OCI-LY7 (cell line): ENCODE measurements at regions of chr18 and their contacts with region 1.

Region 1: DNA sequence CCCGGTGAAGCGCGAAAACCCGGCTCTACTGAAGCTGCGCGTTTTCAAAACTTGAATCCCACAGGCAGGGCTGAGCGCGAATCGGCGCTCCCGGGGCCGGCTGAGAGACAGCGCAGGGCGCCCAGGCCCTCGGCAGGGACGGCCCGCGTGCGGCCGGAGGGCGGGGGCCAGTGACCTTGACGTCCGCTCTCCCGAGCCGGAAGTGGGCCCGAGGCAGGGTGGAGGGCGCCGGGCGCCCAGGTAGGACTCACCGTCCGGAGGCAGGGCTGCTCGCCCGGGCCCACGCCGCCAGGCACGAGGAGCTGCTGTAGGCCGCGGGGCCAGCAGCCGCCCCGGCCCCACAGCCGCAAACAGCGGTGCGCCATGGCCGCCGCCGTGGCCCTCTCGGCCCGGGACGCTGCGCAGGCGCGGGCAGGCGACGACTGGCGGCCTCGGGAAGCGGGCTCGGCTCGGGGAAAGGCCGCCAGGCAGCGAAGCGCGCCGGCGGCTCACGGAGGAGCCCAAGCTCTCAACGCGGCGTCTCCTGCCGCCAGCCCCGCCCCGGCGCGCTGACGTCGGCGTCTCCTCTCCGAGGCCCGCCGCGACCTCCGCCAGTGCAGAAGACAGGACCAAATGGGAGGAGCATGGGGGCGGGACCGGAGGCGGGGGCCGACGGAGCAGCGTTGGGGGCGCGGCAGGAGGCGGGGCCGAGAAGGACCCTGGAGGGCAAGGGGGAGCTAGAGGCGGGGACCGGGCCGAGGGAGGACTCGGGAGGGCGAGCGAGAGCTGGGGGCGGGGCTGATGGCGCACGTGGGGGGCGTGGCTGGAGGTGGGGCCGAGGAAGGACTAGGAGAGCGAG is at the start of gene AFG3L2:
- DNase-seq: peak; percentile 98
- H3K4me3 ChIP-seq: peak within 1 kb of the TSS; percentile 85
- H3K27ac ChIP-seq: peak within 1 kb of the TSS; percentile 65
- H3K4me1 ChIP-seq: peaks cover 16% of the 10 kb centered on the region
- CTCF ChIP-seq: 0 out of 2 replicates have a peak, but pooled peaks have one; percentile 6
- total RNA-seq, gene AFG3L2: 44.8 and 49.2 TPM in 2 replicates

Region 2: DNA sequence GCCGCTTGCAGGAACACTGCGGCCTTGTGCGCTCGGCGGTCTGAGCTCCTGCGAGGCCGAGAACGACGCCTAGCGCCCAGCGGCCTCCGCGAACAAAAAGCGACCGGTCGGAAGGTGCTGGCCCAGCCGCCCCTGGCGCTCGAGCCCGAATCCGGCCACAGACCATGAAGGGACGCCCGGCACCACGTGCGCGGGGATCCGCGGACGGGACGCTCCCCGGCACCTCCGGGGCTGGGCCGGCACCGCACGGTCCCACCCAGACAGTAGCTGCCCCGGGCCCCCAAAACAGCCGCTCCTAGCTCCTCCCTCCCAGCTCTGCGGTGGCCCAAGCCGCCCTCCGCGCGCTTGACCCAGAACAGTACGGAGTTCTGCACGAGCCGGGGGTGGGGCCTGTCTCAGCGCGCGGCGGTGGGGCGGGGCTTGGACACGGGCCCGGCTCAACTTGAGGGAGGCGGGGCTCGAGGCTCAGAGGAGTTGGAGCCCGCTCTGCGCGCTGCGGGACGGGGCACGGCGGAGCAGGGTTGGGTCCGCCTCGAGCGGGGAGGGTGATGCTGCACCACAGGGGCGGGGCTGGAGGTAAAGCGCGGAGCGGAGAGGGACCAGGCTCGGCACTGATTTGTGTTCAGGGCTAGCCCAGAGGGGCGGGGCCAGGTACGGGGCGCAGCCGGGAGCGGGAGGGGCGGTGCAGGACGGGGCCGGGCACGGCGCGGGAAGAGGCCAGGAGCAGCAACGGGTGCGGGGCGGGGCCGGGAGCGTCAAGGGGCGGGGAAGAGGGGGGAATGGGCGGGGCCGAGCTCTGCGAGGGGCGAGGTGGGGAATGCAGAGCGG is 396.2 kb before region 1 on chr18:
- CTCF ChIA-PET with region 1: no interaction called
- POLR2A ChIA-PET with region 1: interaction called, 3 read pairs
- intact Hi-C with region 1: loop called (anchors 1 kb)
- DNase-seq: peak; percentile 98
- H3K4me3 ChIP-seq: peak overlapping the region; percentile 91
- H3K27ac ChIP-seq: peak overlapping the region; percentile 70
- H3K4me1 ChIP-seq: peaks cover 15% of the 10 kb centered on the region
- CTCF ChIP-seq: no peak; the same call in 1 of the 2 replicates

Region 3: GRCh38 chr18:12015416-12016062 is 361.4 kb before region 1 on chr18:
- CTCF ChIA-PET with region 1: no interaction called
- POLR2A ChIA-PET with region 1: no interaction called
- intact Hi-C with region 1: no loop called
- DNase-seq: no peak
- H3K4me3 ChIP-seq: no peak overlapping the region
- H3K27ac ChIP-seq: no peak overlapping the region
- H3K4me1 ChIP-seq: peaks cover 2% of the 10 kb centered on the region
- CTCF ChIP-seq: no peak

Region 4: DNA sequence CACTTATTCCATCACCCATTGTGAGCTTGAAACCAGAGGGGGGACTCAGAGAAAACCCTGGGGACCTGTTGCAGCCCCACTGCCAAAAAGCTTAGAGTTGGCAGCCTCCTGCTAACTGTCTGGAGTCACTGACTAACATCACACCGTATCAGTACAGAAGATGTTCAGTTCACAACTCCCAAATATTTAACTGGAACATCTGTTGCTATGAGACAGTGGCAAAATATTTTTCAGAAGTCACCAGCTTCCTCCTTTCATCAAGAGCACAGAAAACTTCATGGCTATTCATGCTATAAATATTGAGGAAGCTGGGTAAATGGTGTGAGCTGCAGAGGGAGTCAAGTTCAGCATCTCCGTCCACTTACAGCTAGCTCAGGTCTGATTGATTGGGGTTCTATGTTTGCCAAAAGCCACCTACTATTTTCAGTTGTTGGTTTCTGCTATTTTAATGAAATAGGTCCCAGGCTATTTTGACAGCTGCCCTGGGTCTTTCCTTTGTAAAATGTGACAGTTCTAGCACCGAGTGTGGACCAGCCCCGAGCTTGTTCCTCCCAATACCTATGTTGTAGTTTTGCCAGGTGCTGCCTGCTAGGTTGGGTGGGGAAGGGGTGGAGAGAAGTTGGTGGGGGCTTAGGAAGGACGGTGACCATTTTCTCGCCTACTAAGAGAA is 59.1 kb before region 1 on chr18:
- CTCF ChIA-PET with region 1: no interaction called
- POLR2A ChIA-PET with region 1: interaction called, 9 read pairs
- intact Hi-C with region 1: loop called (anchors 5 kb)
- DNase-seq: peak; percentile 42
- H3K4me3 ChIP-seq: peak overlapping the region; percentile 17
- H3K27ac ChIP-seq: peak overlapping the region; percentile 49
- H3K4me1 ChIP-seq: peaks cover 61% of the 10 kb centered on the region
- CTCF ChIP-seq: no peak

Region 5: GRCh38 chr18:12420831-12421421 is 44.0 kb after region 1 on chr18:
- CTCF ChIA-PET with region 1: no interaction called
- POLR2A ChIA-PET with region 1: interaction called, 3 read pairs
- intact Hi-C with region 1: loop called (anchors 1 kb)
- DNase-seq: peak; percentile 89
- H3K4me3 ChIP-seq: peak overlapping the region; percentile 66
- H3K27ac ChIP-seq: peak overlapping the region; percentile 71
- H3K4me1 ChIP-seq: peaks cover 23% of the 10 kb centered on the region
- CTCF ChIP-seq: no peak

Region 6: DNA sequence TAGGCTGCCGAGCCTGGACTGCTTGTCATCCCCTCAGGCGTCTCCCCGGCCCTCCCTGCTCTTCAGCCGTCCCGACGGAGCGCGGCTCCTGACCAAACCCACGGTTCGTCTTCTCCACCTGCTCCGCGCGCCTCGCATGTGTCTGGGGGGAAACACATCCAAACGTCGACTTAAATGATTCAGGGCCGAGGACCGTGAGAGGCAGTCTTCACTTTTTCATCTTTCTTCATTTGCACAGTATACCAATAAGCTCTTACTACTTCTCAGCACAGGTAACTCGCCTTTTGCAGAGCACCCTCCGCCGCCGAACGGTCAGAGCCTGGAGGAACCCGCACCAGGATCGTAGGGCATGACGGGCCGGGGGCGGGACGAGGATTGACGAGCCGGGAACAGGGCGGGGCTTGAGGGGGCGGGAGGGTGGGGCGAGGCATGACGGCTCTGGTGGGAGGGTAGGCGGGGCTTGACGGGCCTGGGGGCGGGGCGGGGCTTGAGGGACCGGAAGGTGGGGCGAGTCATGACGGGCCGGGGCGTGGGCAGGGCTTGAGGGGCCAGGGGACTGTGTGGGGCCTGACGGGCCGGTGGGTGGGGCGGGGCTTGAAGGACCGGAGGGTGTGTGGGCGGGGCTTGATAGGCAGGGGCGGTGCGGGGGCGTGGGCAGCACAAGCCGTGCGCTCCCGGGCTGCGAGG is 570.6 kb after region 1 on chr18 and contains the start of gene SEH1L:
- CTCF ChIA-PET with region 1: no interaction called
- POLR2A ChIA-PET with region 1: no interaction called
- intact Hi-C with region 1: loop called (anchors 2 kb)
- DNase-seq: peak; percentile 98
- H3K4me3 ChIP-seq: peak within 1 kb of the TSS; percentile 85
- H3K27ac ChIP-seq: peak within 1 kb of the TSS; percentile 97
- H3K4me1 ChIP-seq: peaks cover 37% of the 10 kb centered on the region
- CTCF ChIP-seq: no peak
- total RNA-seq, gene SEH1L: 61.6 and 74.6 TPM in 2 replicates